ENCODE measurements at regions of chr19 and their contacts with region 1.

Region 1: GRCh38 chr19:12657966-12658365 is 8.6 kb downstream of the MAN2B1 start:
- DNase-seq: no peak
- CTCF ChIP-seq: no peak

Region 2: DNA sequence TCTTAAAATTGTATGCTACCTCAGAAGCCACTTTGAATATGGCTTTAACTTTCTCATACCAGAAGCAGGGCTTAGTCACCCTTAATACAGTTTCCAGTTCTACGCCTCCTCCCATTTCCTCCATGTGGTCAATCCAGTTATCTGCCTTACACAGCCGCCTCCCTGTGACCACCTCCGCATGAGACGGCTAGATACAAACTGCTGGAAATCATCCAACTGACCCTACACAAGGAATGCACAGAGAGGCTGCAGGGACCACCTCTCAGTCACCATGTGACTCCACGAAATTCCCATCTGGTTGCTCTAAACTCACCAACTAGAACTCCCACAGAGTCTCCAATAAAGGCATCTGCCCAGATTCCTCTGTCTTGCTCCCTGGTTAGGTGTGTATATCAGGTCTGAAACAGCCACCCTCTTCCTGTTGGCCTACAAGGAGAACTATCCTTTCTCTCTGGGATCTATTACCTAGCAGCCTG is 113.5 kb before region 1 on chr19:
- CTCF ChIA-PET with region 1: no interaction called
- POLR2A ChIA-PET with region 1: interaction called, 10 read pairs
- DNase-seq: no peak
- CTCF ChIP-seq: no peak

Region 3: DNA sequence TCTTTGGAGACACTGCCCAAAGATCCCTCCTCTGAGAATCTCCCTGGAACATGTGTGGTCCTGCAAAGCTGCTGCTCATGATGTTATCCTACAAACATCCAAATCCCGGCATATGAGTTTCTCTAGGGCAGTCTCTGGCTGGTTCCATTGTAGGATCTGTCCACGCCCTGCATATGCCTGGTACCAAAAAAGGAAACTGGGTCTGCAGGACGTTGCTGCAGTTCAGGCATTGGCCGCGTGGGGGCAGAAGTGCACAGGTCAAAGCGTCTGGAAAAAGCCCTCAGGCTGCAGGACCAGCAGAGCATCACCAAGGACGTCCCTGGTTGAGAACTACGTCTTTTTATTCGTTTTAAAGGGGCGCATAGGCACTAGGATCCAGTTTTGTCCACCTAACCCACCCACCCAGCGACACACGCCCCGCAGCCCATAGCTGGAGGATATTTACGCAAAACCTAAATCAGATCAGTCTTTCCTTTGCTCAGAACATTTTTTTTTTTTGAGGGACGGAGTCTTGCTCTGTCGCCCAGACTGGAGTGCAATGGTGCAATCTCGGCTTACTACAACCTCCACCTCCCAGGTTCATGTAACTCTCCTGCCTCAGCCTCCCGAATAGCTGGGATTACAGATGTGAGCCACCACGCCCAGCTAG is 93.8 kb before region 1 on chr19:
- CTCF ChIA-PET with region 1: no interaction called
- POLR2A ChIA-PET with region 1: no interaction called
- DNase-seq: peak; percentile 92
- CTCF ChIP-seq: peak; percentile 97